ENCODE measurements at regions of chr11 and their contacts with region 1.

Region 1: DNA sequence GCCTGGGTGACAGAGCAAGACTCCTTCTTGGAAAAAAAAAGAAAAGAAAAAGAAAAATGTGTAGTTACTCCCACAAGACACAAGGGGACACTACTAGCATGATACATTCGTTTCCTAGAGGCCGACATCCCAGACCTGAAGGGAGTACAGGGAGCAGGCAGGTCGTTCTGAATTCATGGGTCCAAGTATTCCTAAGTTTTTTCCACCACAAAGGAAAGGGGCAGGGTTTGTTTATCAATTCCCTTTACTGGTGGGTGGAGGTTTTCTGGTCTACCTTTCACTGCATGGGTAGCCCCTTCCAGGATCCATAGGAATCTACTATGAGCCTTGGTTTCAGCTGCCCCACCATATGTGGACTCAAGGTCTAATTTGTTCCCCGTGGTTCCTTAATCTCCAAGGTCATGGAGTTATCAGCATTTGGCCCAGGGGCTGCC is 11.8 kb downstream of the TIGD3 start:
- DNase-seq: peak in 5 of 35 experiments; percentile 22 to 76 (median 30)
- ATAC-seq: peak; percentile 67 to 80 (median 72)
- H3K4me3 ChIP-seq: no peak overlapping the region
- H3K4me3 Mint-ChIP-seq: no peak overlapping the region
- H3K27ac ChIP-seq: no peak overlapping the region
- H3K27ac Mint-ChIP-seq: no peak overlapping the region
- H3K4me1 ChIP-seq: peaks cover 0 to 5% of the 10 kb centered on the region in 2 experiments
- H3K4me1 Mint-ChIP-seq: peaks cover 3 to 6% (median 4%) of the 10 kb centered on the region in 3 donors
- H3K27me3 ChIP-seq: no peaks in the 10 kb centered on the region
- H3K27me3 Mint-ChIP-seq: no peaks in the 10 kb centered on the region

Region 2: GRCh38 chr11:65382033-65382807 is 15.9 kb after region 1 on chr11 and contains the start of gene SLC25A45:
- CTCF ChIA-PET with region 1: interaction called in 1 of 2 experiments, 3 read pairs
- POLR2A ChIA-PET with region 1: interaction called in 1 of 2 experiments, 10 read pairs
- DNase-seq: peak; percentile 81 to 93 (median 85)
- ATAC-seq: peak; percentile 83 to 89 (median 85)
- H3K4me3 ChIP-seq: peak within 1 kb of the TSS; percentile 64 to 66
- H3K4me3 Mint-ChIP-seq: peak within 1 kb of the TSS; percentile 82 to 96 (median 84)
- H3K27ac ChIP-seq: peak within 1 kb of the TSS; percentile 95
- H3K27ac Mint-ChIP-seq: peak within 1 kb of the TSS; percentile 98 to 100
- H3K4me1 ChIP-seq: peaks cover 14 to 67% of the 10 kb centered on the region in 2 experiments
- H3K4me1 Mint-ChIP-seq: peaks cover 48 to 61% (median 57%) of the 10 kb centered on the region in 3 donors
- H3K27me3 ChIP-seq: no peaks in the 10 kb centered on the region
- H3K27me3 Mint-ChIP-seq: no peaks in the 10 kb centered on the region
- total RNA-seq, gene SLC25A45: 18.7 to 72.2 (median 22.6) TPM